ENCODE measurements at regions of chr1 and their contacts with region 1.

Region 1: GRCh38 chr1:160261893-160262794 is at the start of gene DCAF8:
- DNase-seq: peak; percentile 99
- ATAC-seq: peak; percentile 96
- H3K4me3 Mint-ChIP-seq: peak within 1 kb of the TSS; percentile 98
- H3K27ac Mint-ChIP-seq: peak within 1 kb of the TSS; percentile 99
- H3K4me1 Mint-ChIP-seq: peaks cover 32% of the 10 kb centered on the region
- H3K27me3 Mint-ChIP-seq: peaks cover 7% of the 10 kb centered on the region; the same call in 1 of the 2 replicates
- CTCF ChIP-seq: no peak
- total RNA-seq, gene DCAF8: 121 to 143 TPM (median 128 TPM) in 3 replicates

Region 2: DNA sequence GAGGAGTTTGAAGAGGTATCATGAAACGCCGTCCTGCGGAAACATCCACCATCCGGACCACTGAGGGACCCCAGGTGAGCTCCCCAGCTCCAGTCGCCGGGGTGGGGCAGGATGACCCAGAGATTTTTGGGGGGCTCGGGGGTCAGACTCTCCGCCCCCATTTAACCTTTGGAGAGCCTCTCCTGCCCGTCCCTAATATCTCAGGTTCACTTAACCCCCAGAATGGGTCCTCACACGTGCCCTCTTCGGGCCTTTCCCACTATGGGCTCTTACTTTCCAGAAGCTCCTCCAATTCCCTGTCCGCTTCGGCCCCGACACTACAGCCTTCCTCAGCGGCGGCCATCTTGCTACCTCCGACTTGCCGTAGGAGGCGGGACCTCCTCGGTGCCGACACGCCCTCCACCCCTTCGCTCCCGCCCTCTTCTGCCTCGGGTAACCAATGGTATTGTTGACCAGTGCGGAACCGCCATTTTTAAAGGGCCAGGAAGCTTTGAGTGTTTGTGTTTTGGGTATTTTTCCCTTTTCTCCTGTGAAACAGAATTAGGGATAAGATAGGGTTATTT is 22.7 kb after region 1 on chr1 and contains the start of gene PEX19:
- CTCF ChIA-PET with region 1: interaction called, 8 read pairs
- POLR2A ChIA-PET with region 1: interaction called, 12 read pairs
- DNase-seq: peak; percentile 96
- ATAC-seq: peak; percentile 97
- H3K4me3 Mint-ChIP-seq: peak within 1 kb of the TSS; percentile 91
- H3K27ac Mint-ChIP-seq: peak within 1 kb of the TSS; percentile 97
- H3K4me1 Mint-ChIP-seq: peaks cover 22% of the 10 kb centered on the region
- H3K27me3 Mint-ChIP-seq: no peaks in the 10 kb centered on the region
- CTCF ChIP-seq: no peak
- total RNA-seq, gene PEX19: 80.6 to 85.5 TPM (median 85.2 TPM) in 3 replicates

Region 3: DNA sequence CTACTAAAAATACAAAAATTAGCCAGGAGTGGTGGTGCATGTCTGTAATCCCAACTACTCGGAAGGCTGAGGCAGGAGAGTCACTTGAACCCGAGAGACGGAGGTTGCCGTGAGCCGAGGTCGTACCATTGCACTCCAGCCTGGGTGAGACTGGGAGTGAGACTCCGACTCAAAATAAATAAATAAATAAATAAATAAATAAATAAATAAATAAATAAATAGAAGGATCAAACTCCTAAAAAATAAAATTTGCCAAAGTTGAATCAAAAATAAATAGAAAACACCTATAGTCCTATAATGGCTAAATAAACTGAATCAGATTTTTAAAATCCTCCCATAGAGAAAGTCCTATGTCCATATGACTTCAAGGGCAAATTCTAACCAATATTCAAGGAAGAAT is 38.0 kb after region 1 on chr1:
- CTCF ChIA-PET with region 1: no interaction called
- POLR2A ChIA-PET with region 1: no interaction called
- DNase-seq: no peak
- ATAC-seq: no peak
- H3K4me3 Mint-ChIP-seq: no peak overlapping the region
- H3K27ac Mint-ChIP-seq: no peak overlapping the region
- H3K4me1 Mint-ChIP-seq: no peaks in the 10 kb centered on the region
- H3K27me3 Mint-ChIP-seq: no peaks in the 10 kb centered on the region
- CTCF ChIP-seq: no peak

Region 4: DNA sequence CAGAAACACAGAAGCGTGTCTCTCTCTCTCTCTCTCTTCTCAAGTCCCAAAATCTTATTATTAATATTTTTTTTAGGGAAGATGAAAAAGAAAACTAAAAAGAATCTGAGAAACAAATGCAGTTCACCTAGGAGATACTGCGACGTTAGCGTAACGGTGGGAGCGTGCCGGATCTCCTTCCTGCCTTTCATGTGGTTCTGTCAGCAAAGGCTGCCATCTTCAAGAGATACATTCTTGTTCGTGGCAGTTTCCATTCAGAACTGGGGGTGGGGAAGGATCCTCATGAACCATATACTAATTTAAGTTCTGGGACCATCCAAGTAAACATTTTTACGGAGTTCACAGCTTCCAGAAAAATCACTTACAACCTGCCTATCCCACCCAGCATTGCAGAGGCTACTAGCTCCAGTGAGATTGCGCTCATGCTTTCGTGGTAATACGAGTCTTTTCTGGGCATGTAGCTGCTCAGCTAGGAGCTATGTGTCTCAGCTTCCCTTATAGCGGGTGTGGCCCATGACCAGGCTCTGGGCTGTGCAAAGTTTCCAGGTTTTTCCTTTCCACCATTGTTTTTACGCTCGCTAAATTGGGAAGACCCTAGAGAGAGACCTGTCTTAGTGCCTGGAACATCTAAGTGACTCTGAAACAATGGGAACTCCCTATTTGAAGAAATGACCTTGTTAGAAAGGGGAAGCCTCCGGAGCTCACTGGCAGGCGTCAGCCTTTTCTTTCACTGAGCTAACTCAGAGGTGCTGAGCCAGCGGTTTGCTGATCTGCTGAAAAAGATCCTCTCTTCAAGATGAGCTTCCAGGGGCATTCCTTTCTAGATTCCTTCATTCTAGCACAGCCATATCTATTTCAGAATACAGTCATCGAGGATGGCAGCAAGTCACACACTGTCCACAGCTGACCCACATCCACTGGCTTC is 367.4 kb after region 1 on chr1:
- CTCF ChIA-PET with region 1: no interaction called
- POLR2A ChIA-PET with region 1: no interaction called
- DNase-seq: no peak
- ATAC-seq: no peak; the same call in 1 of the 2 replicates
- H3K4me3 Mint-ChIP-seq: no peak overlapping the region
- H3K27ac Mint-ChIP-seq: no peak overlapping the region
- H3K4me1 Mint-ChIP-seq: peaks cover 7% of the 10 kb centered on the region; the same call in 1 of the 2 replicates
- H3K27me3 Mint-ChIP-seq: no peaks in the 10 kb centered on the region; the same call in 1 of the 2 replicates
- CTCF ChIP-seq: no peak